Common myeloid progenitor, CD34-positive (primary cell): ENCODE measurements at regions of chr1 and their contacts with region 1.

Region 1: DNA sequence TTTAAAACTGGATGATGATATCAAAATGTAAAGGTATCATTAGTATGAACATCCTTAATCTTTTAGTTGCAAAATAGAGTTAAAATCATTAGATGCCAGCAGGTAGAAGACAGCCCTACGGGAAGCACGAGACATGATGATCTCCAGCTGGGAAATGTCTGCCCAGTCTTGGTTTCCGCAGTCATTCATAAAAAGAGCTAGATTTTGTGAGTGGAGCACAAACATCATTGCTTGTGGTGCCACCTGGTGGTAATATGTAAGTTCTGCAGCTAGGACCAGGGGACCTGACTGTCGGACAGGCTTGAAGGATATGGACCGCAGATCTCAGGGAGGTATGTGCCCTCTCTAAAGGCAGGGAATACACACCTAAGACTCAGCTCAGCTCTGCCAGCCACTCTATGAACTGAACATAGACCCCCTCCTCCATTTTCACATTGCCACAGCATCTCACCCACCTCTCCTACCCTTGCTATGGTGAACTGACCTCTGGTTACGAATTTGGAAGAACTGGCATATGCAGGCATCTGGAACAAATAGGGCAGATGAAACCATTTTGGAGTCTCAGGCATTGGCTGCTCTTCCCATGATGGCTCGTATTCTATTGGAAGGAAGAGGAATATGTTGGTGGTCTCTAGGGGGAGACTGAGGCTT is 9.2 kb downstream of the FCMR start:
- DNase-seq: peak; percentile 74 to 84 (median 77)
- H3K4me3 ChIP-seq: no peak overlapping the region
- H3K27ac ChIP-seq: no peak overlapping the region
- H3K4me1 ChIP-seq: peaks cover 3 to 27% (median 13%) of the 10 kb centered on the region in 4 experiments
- H3K27me3 ChIP-seq: peaks cover 0 to 9% (median 0%) of the 10 kb centered on the region in 5 experiments

Region 2: GRCh38 chr1:206540044-206540780 is 372.4 kb before region 1 on chr1:
- CTCF ChIA-PET with region 1: no interaction called
- POLR2A ChIA-PET with region 1: no interaction called
- DNase-seq: no peak
- H3K4me3 ChIP-seq: no peak overlapping the region
- H3K27ac ChIP-seq: no peak overlapping the region
- H3K4me1 ChIP-seq: peaks cover 0 to 5% (median 2%) of the 10 kb centered on the region in 4 experiments
- H3K27me3 ChIP-seq: no peaks in the 10 kb centered on the region

Region 3: DNA sequence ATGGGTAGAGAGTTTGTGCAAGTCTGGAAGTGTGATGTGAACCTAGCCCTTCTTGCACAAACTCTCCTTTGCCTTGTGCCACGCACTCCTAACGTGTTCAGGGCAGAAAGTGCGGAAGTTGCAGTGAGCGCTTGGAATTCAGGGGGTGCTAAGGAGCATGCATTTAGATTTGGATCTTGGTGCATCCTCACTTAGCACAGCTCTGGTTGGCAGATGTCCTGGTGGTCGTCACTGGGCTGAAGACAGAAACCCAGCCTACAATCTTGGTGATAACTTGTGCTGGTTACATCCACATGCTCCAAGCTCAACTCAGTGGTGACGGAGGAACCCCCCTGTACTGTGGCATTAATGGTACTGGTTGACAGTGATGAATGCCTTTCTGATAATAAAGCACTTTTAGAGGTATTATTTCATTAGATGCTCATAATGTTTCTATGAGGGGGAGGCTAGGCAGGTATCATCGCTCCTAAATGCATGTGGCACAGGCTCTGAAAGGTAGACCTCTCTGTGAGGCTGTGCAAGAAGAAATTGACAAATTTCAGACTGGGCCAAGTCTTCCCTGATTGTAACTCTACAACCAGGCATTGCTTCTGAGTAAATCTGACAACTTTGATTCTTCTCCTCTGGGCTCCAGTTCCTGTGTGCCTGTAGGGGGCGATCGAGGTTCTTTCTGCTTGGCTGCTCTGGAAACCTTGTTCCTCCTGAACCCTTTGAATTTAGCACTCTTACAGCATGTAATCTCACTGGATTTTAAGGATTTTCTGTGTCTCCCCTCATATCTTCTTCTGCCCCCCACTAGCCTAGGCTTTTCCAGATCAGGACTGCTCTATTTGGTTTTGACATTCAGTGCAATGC is 187.2 kb before region 1 on chr1:
- CTCF ChIA-PET with region 1: interaction called, 30 read pairs
- POLR2A ChIA-PET with region 1: no interaction called
- DNase-seq: peak; percentile 57 to 79 (median 76)
- H3K4me3 ChIP-seq: no peak overlapping the region
- H3K27ac ChIP-seq: no peak overlapping the region
- H3K4me1 ChIP-seq: peaks cover 24 to 62% (median 50%) of the 10 kb centered on the region in 4 experiments
- H3K27me3 ChIP-seq: no peaks in the 10 kb centered on the region

Region 4: GRCh38 chr1:206803221-206803730 is 109.3 kb before region 1 on chr1:
- CTCF ChIA-PET with region 1: interaction called, 76 read pairs
- POLR2A ChIA-PET with region 1: no interaction called
- DNase-seq: no peak
- H3K4me3 ChIP-seq: no peak overlapping the region
- H3K27ac ChIP-seq: no peak overlapping the region
- H3K4me1 ChIP-seq: peaks cover 0 to 10% (median under 1%) of the 10 kb centered on the region in 4 experiments
- H3K27me3 ChIP-seq: no peaks in the 10 kb centered on the region

Region 5: DNA sequence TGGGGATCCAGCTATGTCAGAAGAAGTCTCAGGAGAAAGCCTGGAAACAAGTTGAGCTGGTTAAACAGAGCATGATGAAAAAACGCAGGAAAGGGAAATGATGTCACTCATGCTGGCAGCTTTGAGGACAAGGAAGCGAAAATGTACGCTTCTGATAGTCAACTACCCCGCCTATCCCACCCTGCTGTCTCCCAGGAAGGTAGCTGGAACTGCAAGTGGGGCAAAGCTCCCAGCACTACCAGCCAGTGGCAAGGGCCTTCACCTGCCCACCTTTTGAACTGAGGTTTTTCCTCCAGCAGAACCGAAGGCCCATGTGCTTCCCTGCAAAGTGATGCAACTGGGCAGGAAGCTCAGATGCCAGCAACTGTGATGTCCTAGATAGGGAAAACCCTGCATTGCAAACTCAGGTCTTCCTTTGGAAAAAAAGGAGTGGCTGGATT is 53.5 kb before region 1 on chr1:
- CTCF ChIA-PET with region 1: interaction called, 14 read pairs
- POLR2A ChIA-PET with region 1: no interaction called
- DNase-seq: no peak
- H3K4me3 ChIP-seq: no peak overlapping the region
- H3K27ac ChIP-seq: no peak overlapping the region
- H3K4me1 ChIP-seq: no peaks in the 10 kb centered on the region
- H3K27me3 ChIP-seq: no peaks in the 10 kb centered on the region

Region 6: GRCh38 chr1:206895830-206896242 is 16.7 kb before region 1 on chr1:
- CTCF ChIA-PET with region 1: interaction called, 20 read pairs
- POLR2A ChIA-PET with region 1: no interaction called
- DNase-seq: no peak
- H3K4me3 ChIP-seq: no peak overlapping the region
- H3K27ac ChIP-seq: no peak overlapping the region
- H3K4me1 ChIP-seq: peaks cover 0 to 3% (median 0%) of the 10 kb centered on the region in 4 experiments
- H3K27me3 ChIP-seq: no peaks in the 10 kb centered on the region

Region 7: GRCh38 chr1:206935491-206936067 is 23.0 kb after region 1 on chr1:
- CTCF ChIA-PET with region 1: interaction called, 111 read pairs
- POLR2A ChIA-PET with region 1: no interaction called
- DNase-seq: peak; percentile 72 to 87 (median 85)
- H3K4me3 ChIP-seq: no peak overlapping the region
- H3K27ac ChIP-seq: no peak overlapping the region
- H3K4me1 ChIP-seq: peaks cover under 1 to 2% (median 2%) of the 10 kb centered on the region in 4 experiments
- H3K27me3 ChIP-seq: no peaks in the 10 kb centered on the region